Calu3 (cell line): ENCODE measurements at regions of chr9 and their contacts with region 1.

Region 1: DNA sequence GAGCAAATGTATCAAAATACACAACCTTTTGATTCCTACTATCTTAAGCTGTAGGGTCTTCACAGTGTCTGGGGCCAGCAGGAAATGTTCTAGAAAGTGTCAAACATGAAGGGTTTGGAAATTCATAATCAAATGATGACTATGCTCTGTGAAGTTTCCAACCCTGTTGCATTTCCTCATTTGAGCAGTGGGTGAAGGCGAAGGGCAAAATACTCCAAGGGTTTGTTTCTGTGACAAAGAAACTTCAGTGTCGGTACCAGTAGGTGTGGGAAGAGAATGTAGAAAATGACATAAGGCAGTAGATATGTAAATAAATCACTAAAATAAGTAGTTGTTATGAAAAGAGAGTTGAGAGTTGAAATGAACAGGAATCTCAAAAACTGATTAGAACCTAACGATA is 576 bp downstream of the ALDOB start:
- DNase-seq: peak; percentile 46
- H3K4me3 Mint-ChIP-seq: peak overlapping the region; percentile 8
- H3K27ac Mint-ChIP-seq: peak overlapping the region; percentile 75
- H3K4me1 Mint-ChIP-seq: peaks cover 34% of the 10 kb centered on the region
- H3K27me3 Mint-ChIP-seq: no peaks in the 10 kb centered on the region
- CTCF ChIP-seq: no peak

Region 2: GRCh38 chr9:101398068-101398929 is 36.7 kb before region 1 on chr9 and contains the starts of genes MRPL50 and ZNF189:
- CTCF ChIA-PET with region 1: no interaction called
- intact Hi-C with region 1: loop called (anchors 2 kb)
- DNase-seq: peak; percentile 92
- H3K4me3 Mint-ChIP-seq: peak within 1 kb of the TSS; percentile 93
- H3K27ac Mint-ChIP-seq: peak within 1 kb of the TSS; percentile 92
- H3K4me1 Mint-ChIP-seq: peaks cover 30% of the 10 kb centered on the region
- H3K27me3 Mint-ChIP-seq: no peaks in the 10 kb centered on the region
- CTCF ChIP-seq: no peak
- total RNA-seq, gene MRPL50: 14.0 TPM in 2 replicates
- total RNA-seq, gene ZNF189: 20.1 and 21.5 TPM in 2 replicates